WTC11 (cell line): ENCODE measurements at regions of chr17 and their contacts with region 1.

Region 1: GRCh38 chr17:8785547-8786413 is 13.4 kb downstream of the MFSD6L start:
- DNase-seq: peak; percentile 97
- ATAC-seq: peak; percentile 97
- H3K4me3 Mint-ChIP-seq: no peak overlapping the region
- H3K27ac Mint-ChIP-seq: no peak overlapping the region
- H3K4me1 Mint-ChIP-seq: peaks cover 19% of the 10 kb centered on the region
- H3K27me3 Mint-ChIP-seq: no peaks in the 10 kb centered on the region; the same call in 1 of the 2 replicates
- CTCF ChIP-seq: peak; percentile 87

Region 2: DNA sequence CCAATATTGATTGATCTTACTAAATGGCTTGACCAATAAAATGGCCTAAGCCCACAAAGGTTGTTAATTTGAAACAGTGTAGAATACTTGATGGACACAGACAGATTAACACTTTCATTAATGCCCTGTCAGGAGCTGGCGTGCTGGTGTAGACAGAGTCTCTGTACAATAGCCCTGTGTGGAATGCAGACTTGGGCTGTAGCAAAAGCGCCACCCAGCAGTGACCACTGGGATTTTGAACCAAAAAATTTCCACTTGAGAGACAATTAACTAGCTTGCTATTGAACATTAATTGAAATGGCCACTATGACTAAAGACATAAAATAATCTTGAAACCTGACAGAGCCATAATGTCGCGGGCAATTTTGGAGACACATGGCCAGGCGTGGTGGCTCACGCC is 803.1 kb before region 1 on chr17:
- CTCF ChIA-PET with region 1: no interaction called
- POLR2A ChIA-PET with region 1: no interaction called
- DNase-seq: no peak
- ATAC-seq: no peak
- H3K4me3 Mint-ChIP-seq: no peak overlapping the region
- H3K27ac Mint-ChIP-seq: no peak overlapping the region
- H3K4me1 Mint-ChIP-seq: peaks cover 10% of the 10 kb centered on the region
- H3K27me3 Mint-ChIP-seq: peaks cover 13% of the 10 kb centered on the region
- CTCF ChIP-seq: no peak

Region 3: DNA sequence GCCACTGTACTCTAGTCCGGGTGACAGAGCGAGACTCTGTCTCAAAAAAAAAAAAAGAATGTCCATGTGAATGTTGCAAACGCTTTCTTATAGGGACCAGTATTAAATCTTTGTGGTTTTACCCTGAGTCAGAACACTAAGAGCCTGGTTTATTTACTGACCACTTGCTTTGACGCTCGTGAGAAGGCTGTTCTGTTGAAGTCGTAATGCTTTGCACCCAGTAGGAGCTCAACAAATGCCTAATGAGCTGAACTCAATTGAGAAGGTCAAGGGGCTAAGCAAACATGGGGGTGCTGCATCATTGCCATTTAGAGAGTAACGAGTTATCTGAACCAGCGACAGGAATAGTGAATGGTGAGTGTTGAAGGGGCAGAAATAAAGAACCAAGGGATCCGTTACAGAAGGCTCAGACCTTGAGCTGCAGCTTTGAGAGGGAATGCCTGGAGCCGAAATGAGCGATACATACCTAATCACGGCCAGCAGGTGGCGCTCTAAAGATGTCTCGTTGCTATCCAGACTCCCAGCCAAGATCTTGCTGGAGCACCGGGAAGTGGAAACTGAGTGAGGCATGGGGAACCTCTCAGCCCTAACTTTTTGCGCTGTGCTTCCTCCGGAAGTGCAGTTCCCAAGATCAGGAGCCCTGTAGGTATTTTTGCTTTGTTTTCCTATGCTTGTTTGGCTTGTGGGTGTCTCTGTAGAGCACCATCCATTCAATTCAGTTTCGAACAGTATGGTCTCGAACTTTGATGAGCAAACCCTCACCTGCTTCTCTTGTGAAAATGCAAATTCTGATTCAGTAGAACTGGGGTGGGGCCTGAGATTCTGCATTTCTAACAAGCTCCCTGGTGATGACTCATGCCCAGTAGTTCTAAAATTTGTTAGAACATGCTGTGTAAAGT is 375.6 kb before region 1 on chr17:
- CTCF ChIA-PET with region 1: interaction called, 19 read pairs
- POLR2A ChIA-PET with region 1: no interaction called
- DNase-seq: peak; percentile 92
- ATAC-seq: peak; percentile 88
- H3K4me3 Mint-ChIP-seq: no peak overlapping the region
- H3K27ac Mint-ChIP-seq: no peak overlapping the region
- H3K4me1 Mint-ChIP-seq: peaks cover 14% of the 10 kb centered on the region
- H3K27me3 Mint-ChIP-seq: peaks cover 2% of the 10 kb centered on the region; the same call in 1 of the 2 replicates
- CTCF ChIP-seq: peak; percentile 90

Region 4: GRCh38 chr17:8577868-8578267 is 207.9 kb before region 1 on chr17:
- CTCF ChIA-PET with region 1: interaction called, 10 read pairs
- POLR2A ChIA-PET with region 1: no interaction called
- DNase-seq: no peak
- ATAC-seq: no peak
- H3K4me3 Mint-ChIP-seq: no peak overlapping the region
- H3K27ac Mint-ChIP-seq: 0 out of 2 replicates have a peak overlapping the region, but pooled peaks have one; percentile 23
- H3K4me1 Mint-ChIP-seq: peaks cover 20% of the 10 kb centered on the region
- H3K27me3 Mint-ChIP-seq: no peaks in the 10 kb centered on the region
- CTCF ChIP-seq: no peak

Region 5: DNA sequence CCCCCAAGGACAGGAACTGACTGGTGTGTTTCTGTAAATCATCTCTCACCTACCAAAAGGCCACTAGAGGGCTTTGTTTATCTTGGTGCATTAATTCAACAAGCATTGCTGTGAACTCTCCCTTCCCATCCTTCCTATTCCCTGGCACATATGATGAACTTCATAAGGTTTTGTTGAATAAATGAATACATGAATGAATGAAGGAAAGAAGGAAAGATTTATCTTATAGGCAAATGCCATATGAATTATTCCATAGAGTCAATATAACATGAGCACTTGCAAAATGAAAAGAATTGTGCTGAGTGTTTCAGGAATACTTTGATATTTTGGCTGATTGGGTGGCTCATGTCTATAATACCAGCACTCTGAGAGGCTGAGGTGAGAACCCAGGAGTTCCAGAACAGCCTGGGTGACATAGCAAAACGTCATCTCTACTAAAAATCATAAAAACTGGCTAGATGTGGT is 31.8 kb before region 1 on chr17:
- CTCF ChIA-PET with region 1: interaction called, 65 read pairs
- POLR2A ChIA-PET with region 1: no interaction called
- DNase-seq: no peak
- ATAC-seq: peak; percentile 69; the same call in 1 of the 2 replicates
- H3K4me3 Mint-ChIP-seq: no peak overlapping the region
- H3K27ac Mint-ChIP-seq: no peak overlapping the region
- H3K4me1 Mint-ChIP-seq: peaks cover 15% of the 10 kb centered on the region
- H3K27me3 Mint-ChIP-seq: peaks cover 7% of the 10 kb centered on the region
- CTCF ChIP-seq: no peak

Region 6: DNA sequence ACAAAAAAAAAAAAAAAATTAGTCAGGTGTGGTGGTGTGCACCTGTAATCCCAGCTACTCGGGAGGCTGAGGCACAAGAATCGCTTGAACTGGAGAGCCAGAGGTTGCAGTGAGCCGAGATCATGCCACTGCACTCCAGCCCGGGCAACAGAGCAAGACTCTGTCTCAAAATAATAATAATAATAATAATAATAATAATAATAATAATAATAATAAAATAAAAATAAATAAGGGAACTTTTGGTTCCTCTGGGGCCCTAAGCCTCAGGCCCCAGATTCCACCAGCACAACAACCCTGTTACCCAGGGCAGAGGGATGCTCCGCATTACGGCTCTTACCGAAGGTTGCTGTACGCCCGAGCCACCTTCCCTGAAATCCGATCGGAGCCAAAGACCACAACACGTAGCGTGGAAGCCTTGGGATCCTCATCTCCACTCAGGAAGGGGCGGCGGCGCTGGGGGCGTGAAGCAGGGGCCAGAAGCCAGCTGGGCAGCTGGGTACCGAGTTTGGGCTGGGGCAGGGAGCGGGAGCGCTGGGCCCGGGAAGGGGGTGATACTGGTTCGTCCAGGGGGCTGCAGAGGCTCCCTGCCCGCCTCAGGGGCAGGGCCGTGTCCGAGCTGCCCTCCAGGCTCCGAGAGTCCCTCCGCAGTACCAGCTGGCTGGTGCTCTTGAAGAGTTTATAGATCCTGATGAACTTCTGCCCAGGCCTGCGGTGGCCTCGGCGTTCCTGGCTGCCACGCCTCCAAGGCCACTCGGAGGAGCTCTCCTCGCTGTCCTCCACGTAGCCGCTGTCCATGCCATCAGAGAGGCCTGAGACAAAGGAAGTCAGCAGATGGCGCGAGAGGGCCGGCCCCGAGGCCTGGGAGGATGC is 102.3 kb after region 1 on chr17:
- CTCF ChIA-PET with region 1: interaction called, 10 read pairs
- POLR2A ChIA-PET with region 1: interaction called, 3 read pairs
- DNase-seq: peak; percentile 89
- ATAC-seq: peak; percentile 82
- H3K4me3 Mint-ChIP-seq: no peak overlapping the region
- H3K27ac Mint-ChIP-seq: no peak overlapping the region
- H3K4me1 Mint-ChIP-seq: no peaks in the 10 kb centered on the region; the same call in 1 of the 2 replicates
- H3K27me3 Mint-ChIP-seq: no peaks in the 10 kb centered on the region; the same call in 1 of the 2 replicates
- CTCF ChIP-seq: no peak

Region 7: GRCh38 chr17:8916466-8916865 is 130.7 kb after region 1 on chr17:
- CTCF ChIA-PET with region 1: no interaction called
- POLR2A ChIA-PET with region 1: no interaction called
- DNase-seq: no peak
- ATAC-seq: no peak
- H3K4me3 Mint-ChIP-seq: no peak overlapping the region
- H3K27ac Mint-ChIP-seq: no peak overlapping the region
- H3K4me1 Mint-ChIP-seq: no peaks in the 10 kb centered on the region
- H3K27me3 Mint-ChIP-seq: peaks cover 8% of the 10 kb centered on the region; the same call in 1 of the 2 replicates
- CTCF ChIP-seq: no peak